Sigmoid colon (tissue), 7 donors: ENCODE measurements at regions of chr1 and their contacts with region 1.

Region 1: DNA sequence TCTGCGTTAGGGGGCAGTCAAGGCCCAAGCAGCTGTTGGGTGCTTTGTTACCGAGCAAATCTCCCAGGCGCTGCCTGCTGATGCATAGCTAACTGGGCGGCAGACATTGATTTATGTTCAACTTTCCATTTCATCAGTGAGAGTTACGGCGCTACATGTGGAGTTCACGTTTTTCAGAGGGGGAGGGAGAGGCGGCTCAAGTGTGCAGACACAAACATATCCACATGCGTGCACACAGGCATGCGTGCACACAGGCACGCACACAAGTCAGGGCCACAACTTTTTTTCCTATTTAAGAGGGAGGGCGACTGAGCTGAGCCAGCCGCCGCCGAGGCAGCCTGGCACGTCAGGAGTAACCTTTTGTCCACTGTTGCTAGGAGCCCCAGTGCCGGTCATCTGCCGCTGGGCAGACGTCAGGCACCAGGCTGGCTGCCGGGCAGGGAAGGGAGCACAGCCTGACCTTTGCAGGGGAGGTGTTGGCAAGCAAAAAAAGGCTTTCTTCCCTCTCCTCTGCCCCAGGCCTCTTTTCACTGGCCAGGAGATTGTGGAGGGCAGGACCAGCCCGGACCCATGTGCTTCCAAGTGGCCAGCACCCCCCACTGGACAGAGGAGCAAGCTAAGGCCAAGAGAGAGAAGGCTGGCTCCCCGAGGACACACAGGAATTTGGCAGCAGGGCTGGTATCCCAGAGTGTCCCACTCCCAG is 73.3 kb downstream of the MRPL37 start:
- DNase-seq: peak; percentile 96
- H3K4me3 ChIP-seq: peak overlapping the region in 3 of 4 donors; percentile 5 to 22 (median 5)
- H3K27ac ChIP-seq: peak overlapping the region; percentile 88 to 95 (median 92)
- H3K4me1 ChIP-seq: peaks cover 0 to 85% (median 84%) of the 10 kb centered on the region in 4 donors
- H3K27me3 ChIP-seq: no peaks in the 10 kb centered on the region
- CTCF ChIP-seq: peak in 3 of 4 experiments; percentile 20 to 72 (median 62)
- EP300 ChIP-seq: peak in 1 of 4 donors; percentile 78
- POLR2A ChIP-seq: no peak

Region 2: GRCh38 chr1:53959664-53960250 is 313.5 kb before region 1 on chr1:
- intact Hi-C with region 1: no loop called
- DNase-seq: no peak
- H3K4me3 ChIP-seq: no peak overlapping the region
- H3K27ac ChIP-seq: no peak overlapping the region
- H3K4me1 ChIP-seq: peaks cover 0 to 13% (median 11%) of the 10 kb centered on the region in 4 donors
- H3K27me3 ChIP-seq: no peaks in the 10 kb centered on the region
- CTCF ChIP-seq: peak; percentile 15 to 50 (median 30)
- EP300 ChIP-seq: no peak
- POLR2A ChIP-seq: no peak

Region 3: GRCh38 chr1:54052934-54053744 is 220.1 kb before region 1 on chr1 and contains the starts of genes TCEANC2 and TMEM59:
- intact Hi-C with region 1: loop called (anchors 5 kb)
- DNase-seq: peak; percentile 99
- H3K4me3 ChIP-seq: peak within 1 kb of the TSS; percentile 87 to 93 (median 90)
- H3K27ac ChIP-seq: peak within 1 kb of the TSS; percentile 96 to 98 (median 97)
- H3K4me1 ChIP-seq: peaks cover 0 to 53% (median 45%) of the 10 kb centered on the region in 4 donors
- H3K27me3 ChIP-seq: no peaks in the 10 kb centered on the region
- CTCF ChIP-seq: peak in 1 of 4 experiments; percentile 18
- EP300 ChIP-seq: no peak
- POLR2A ChIP-seq: peak; percentile 55 to 63
- total RNA-seq, gene TCEANC2: 6.1 to 6.9 (median 6.6) TPM
- total RNA-seq, gene TMEM59: 114 to 299 (median 237) TPM

Region 4: DNA sequence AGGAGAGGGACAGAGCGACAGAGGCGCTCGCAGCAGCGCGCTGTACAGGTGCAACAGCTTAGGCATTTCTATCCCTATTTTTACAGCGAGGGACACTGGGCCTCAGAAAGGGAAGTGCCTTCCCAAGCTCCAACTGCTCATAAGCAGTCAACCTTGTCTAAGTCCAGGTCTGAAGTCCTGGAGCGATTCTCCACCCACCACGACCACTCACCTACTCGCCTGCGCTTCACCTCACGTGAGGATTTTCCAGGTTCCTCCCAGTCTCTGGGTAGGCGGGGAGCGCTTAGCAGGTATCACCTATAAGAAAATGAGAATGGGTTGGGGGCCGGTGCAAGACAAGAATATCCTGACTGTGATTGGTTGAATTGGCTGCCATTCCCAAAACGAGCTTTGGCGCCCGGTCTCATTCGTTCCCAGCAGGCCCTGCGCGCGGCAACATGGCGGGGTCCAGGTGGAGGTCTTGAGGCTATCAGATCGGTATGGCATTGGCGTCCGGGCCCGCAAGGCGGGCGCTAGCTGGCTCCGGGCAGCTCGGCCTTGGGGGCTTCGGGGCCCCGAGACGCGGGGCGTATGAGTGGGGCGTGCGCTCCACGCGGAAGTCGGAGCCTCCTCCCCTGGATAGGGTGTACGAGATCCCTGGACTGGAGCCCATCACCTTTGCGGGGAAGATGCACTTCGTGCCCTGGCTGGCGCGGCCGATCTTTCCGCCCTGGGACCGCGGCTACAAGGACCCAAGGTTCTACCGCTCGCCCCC is 73.3 kb before region 1 on chr1 and contains the starts of genes CYB5RL and MRPL37:
- intact Hi-C with region 1: loop called (anchors 5 kb)
- DNase-seq: peak; percentile 96
- H3K4me3 ChIP-seq: peak within 1 kb of the TSS; percentile 63 to 96 (median 84)
- H3K27ac ChIP-seq: peak within 1 kb of the TSS; percentile 80 to 87 (median 81)
- H3K4me1 ChIP-seq: peaks cover 0 to 36% (median 23%) of the 10 kb centered on the region in 4 donors
- H3K27me3 ChIP-seq: no peaks in the 10 kb centered on the region
- CTCF ChIP-seq: no peak
- EP300 ChIP-seq: no peak
- POLR2A ChIP-seq: peak in 1 of 2 donors; percentile 32
- total RNA-seq, gene CYB5RL: 2.6 to 5.7 (median 5.2) TPM
- total RNA-seq, gene MRPL37: 40.7 to 64.2 (median 55.8) TPM

Region 5: DNA sequence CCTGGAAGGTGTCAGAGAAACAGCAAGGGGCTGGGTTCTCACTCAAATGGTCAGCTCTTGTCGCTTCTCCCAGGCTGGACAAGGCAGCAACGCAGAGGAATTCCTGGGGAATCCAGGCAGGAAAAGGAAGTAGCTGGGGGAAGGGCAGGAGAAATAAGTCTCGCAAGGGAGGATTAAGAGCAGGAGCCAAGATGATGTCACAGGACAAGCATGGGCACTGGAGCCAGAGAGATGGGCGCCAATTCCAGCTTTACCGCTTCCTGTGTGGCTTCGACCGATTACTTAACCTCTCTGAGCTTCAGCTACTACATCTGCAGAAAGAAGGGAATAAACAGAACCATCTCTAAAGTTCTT is 62.5 kb after region 1 on chr1:
- intact Hi-C with region 1: loop called (anchors 5 kb)
- DNase-seq: peak; percentile 90
- H3K4me3 ChIP-seq: peak overlapping the region in 3 of 4 donors; percentile 9 to 28 (median 11)
- H3K27ac ChIP-seq: peak overlapping the region; percentile 83 to 93 (median 86)
- H3K4me1 ChIP-seq: peaks cover 0 to 93% (median 82%) of the 10 kb centered on the region in 4 donors
- H3K27me3 ChIP-seq: no peaks in the 10 kb centered on the region
- CTCF ChIP-seq: no peak
- EP300 ChIP-seq: no peak
- POLR2A ChIP-seq: no peak

Region 6: GRCh38 chr1:54406339-54407153 is 133.3 kb after region 1 on chr1 and contains the start of gene SSBP3:
- intact Hi-C with region 1: loop called (anchors 1 kb)
- DNase-seq: peak; percentile 95
- H3K4me3 ChIP-seq: peak within 1 kb of the TSS; percentile 75 to 99 (median 94)
- H3K27ac ChIP-seq: peak within 1 kb of the TSS; percentile 96 to 100 (median 98)
- H3K4me1 ChIP-seq: peaks cover 0 to 60% (median 47%) of the 10 kb centered on the region in 4 donors
- H3K27me3 ChIP-seq: no peaks in the 10 kb centered on the region
- CTCF ChIP-seq: no peak
- EP300 ChIP-seq: no peak
- POLR2A ChIP-seq: peak; percentile 62 to 70
- total RNA-seq, gene SSBP3: 27.4 to 38.5 (median 34.8) TPM

Region 7: GRCh38 chr1:54547601-54548388 is 274.6 kb after region 1 on chr1 and contains the start of gene ACOT11:
- intact Hi-C with region 1: loop called (anchors 5 kb)
- DNase-seq: peak; percentile 98
- H3K4me3 ChIP-seq: peak within 1 kb of the TSS; percentile 17 to 51 (median 46)
- H3K27ac ChIP-seq: peak within 1 kb of the TSS; percentile 83 to 90 (median 88)
- H3K4me1 ChIP-seq: peaks cover 0 to 53% (median 51%) of the 10 kb centered on the region in 4 donors
- H3K27me3 ChIP-seq: no peaks in the 10 kb centered on the region
- CTCF ChIP-seq: peak; percentile 66 to 93 (median 78)
- EP300 ChIP-seq: peak; percentile 30 to 83 (median 60)
- POLR2A ChIP-seq: peak in 1 of 2 donors; percentile 50
- total RNA-seq, gene ACOT11: 8.9 to 30.5 (median 19.8) TPM